CD14-positive monocyte (primary cell): ENCODE measurements at regions of chr9 and their contacts with region 1.

Region 1: DNA sequence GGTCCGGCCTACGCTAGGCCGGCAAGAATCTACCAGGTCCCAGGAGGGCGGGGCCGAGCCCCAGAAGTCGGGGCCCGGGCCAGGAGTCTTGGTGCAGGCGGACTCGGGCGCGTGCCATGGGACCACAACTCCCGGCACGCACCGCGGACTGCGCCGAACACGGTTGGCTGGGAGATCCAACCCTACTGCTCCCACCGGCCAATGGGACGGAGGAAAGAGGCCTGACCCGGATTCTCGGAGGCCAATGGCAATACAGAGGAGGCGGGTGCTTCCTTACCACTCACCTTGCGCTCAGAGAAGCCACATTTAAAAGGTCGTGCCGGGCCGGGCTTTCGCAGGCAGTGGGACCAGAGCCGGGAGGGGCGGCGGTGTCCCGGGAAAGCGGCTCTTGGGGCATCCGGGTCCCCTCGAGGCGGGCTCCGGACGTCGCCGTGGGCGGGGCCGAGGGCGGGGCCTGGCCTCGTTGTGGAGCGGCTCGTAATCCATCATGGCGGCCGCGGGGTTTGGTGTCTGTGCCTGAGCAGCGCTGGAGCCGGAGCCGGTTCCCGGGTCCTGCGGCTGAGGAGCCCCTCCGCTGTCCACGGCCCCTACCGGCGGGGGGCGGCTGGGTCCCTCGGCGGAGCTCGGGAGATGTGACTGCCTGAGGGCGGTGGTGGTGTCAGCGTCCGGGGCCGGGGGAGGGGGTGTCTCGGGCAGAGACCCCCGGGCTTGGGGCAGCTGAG is 19.1 kb downstream of the EXOSC2 start:
- DNase-seq: peak; percentile 94 to 96 (median 95)
- H3K4me3 ChIP-seq: peak overlapping the region; percentile 89 to 95 (median 92)
- H3K4me3 Mint-ChIP-seq: peak overlapping the region; percentile 93
- H3K27ac ChIP-seq: peak overlapping the region; percentile 91 to 96
- H3K27ac Mint-ChIP-seq: peak overlapping the region; percentile 81 to 95 (median 94)
- H3K4me1 ChIP-seq: peaks cover 37 to 39% of the 10 kb centered on the region in 2 donors
- H3K4me1 Mint-ChIP-seq: peaks cover 36% of the 10 kb centered on the region
- H3K27me3 ChIP-seq: no peaks in the 10 kb centered on the region
- H3K27me3 Mint-ChIP-seq: peaks cover 2 to 7% (median 2%) of the 10 kb centered on the region in 3 donors
- CTCF ChIP-seq: no peak

Region 2: DNA sequence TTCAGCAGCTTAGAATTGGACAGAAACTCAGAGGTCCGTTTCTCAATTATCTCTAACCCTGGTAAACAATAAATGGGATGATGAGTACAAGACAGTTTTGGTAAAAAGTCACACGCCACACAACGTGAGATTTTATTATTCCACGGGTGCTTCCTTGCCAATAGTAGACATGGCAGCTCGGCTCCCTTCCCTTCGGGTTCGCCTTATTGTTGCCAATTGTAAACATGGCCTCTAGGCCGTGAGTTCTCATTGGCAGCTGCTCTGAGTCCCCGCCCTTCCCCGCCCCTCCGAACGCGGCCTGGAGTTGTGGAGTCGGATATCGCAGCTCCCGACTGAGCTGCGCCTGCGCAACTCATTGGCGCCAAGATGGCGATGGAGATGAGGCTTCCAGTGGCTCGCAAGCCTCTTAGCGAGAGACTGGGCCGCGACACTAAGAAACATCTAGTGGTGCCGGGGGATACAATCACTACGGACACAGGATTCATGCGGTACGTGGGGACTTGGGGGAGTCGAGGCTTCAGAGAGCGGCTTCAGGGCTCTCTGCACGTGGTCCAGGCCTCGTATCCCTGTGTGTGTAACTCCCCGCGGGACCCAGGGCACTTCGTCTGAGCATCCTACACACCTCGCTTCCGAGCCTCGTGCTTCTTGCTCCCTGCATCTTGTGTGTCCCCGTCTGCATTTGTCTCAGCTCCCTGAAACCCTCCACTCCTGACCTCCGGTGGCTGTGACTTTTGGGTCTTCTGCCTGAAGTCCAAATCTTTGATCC is 19.1 kb before region 1 on chr9 and contains the start of gene EXOSC2:
- intact Hi-C with region 1: loop called in 1 of 2 experiments (anchors 2 kb)
- DNase-seq: peak; percentile 96 to 98 (median 97)
- H3K4me3 ChIP-seq: peak within 1 kb of the TSS; percentile 66 to 90 (median 81)
- H3K4me3 Mint-ChIP-seq: peak within 1 kb of the TSS; percentile 93 to 98
- H3K27ac ChIP-seq: peak within 1 kb of the TSS; percentile 23 to 81
- H3K27ac Mint-ChIP-seq: peak within 1 kb of the TSS; percentile 80 to 94 (median 87)
- H3K4me1 ChIP-seq: peaks cover 20 to 22% of the 10 kb centered on the region in 2 donors
- H3K4me1 Mint-ChIP-seq: peaks cover 34% of the 10 kb centered on the region
- H3K27me3 ChIP-seq: peaks cover 0 to 7% of the 10 kb centered on the region in 2 donors
- H3K27me3 Mint-ChIP-seq: peaks cover 7 to 12% (median 11%) of the 10 kb centered on the region in 3 donors
- CTCF ChIP-seq: no peak
- polyA plus RNA-seq, gene EXOSC2: 10.2 to 15.8 (median 11.2) TPM

Region 3: GRCh38 chr9:131125128-131126058 is 412.7 kb after region 1 on chr9 and contains the start of gene NUP214:
- intact Hi-C with region 1: loop called in 1 of 2 experiments (anchors 5 kb)
- DNase-seq: peak; percentile 98 to 99 (median 99)
- H3K4me3 ChIP-seq: peak within 1 kb of the TSS; percentile 70 to 97 (median 70)
- H3K4me3 Mint-ChIP-seq: peak within 1 kb of the TSS; percentile 96 to 97
- H3K27ac ChIP-seq: peak within 1 kb of the TSS; percentile 75 to 97
- H3K27ac Mint-ChIP-seq: peak within 1 kb of the TSS; percentile 95 to 98 (median 96)
- H3K4me1 ChIP-seq: peaks cover 12 to 19% of the 10 kb centered on the region in 2 donors
- H3K4me1 Mint-ChIP-seq: peaks cover 13% of the 10 kb centered on the region
- H3K27me3 ChIP-seq: no peaks in the 10 kb centered on the region
- H3K27me3 Mint-ChIP-seq: peaks cover 1 to 2% (median 2%) of the 10 kb centered on the region in 3 donors
- CTCF ChIP-seq: no peak
- polyA plus RNA-seq, gene NUP214: 94.9 to 329 (median 214) TPM